Dorsolateral prefrontal cortex (tissue), 120 donors: ENCODE measurements at regions of chr19 and their contacts with region 1.

Region 1: GRCh38 chr19:2032296-2032941 is 16.9 kb upstream of the BTBD2 start:
- DNase-seq: peak; percentile 90 to 99 (median 96)
- H3K4me3 ChIP-seq: peak overlapping the region in 45 of 59 donors; percentile 1 to 48 (median 28)
- H3K27ac ChIP-seq: peak overlapping the region; percentile 85 to 100 (median 98)
- H3K27me3 ChIP-seq: no peaks in the 10 kb centered on the region
- CTCF ChIP-seq: peak in 16 of 56 donors; percentile 6 to 46 (median 17)

Region 2: DNA sequence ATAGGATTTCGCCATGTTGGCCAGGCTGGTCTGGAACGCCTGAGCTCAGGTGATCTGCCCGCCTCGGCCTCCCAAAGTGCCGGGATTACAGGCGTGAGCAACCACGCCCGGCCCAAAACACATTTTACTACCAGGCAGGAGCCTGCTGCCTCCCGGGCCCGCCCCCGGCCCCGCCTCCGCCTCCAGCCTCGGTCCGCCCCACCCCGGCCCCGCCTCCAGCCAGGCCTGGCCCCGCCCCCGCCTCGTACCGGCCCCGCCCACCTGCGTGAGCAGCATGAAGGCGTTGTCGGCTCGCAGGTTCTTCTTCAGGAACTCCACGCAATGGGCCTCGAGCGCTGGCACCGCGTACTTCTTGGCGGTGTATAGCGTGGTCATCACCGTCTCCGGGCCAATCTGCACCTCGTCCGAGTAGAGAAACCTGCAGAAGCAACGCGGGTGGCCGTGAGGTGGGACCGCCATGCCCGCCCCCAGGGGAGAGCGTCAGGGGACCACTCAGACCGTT is 39.6 kb before region 1 on chr19:
- intact Hi-C with region 1: no loop called
- DNase-seq: no peak
- H3K4me3 ChIP-seq: no peak overlapping the region
- H3K27ac ChIP-seq: no peak overlapping the region
- H3K27me3 ChIP-seq: no peaks in the 10 kb centered on the region
- CTCF ChIP-seq: no peak

Region 3: DNA sequence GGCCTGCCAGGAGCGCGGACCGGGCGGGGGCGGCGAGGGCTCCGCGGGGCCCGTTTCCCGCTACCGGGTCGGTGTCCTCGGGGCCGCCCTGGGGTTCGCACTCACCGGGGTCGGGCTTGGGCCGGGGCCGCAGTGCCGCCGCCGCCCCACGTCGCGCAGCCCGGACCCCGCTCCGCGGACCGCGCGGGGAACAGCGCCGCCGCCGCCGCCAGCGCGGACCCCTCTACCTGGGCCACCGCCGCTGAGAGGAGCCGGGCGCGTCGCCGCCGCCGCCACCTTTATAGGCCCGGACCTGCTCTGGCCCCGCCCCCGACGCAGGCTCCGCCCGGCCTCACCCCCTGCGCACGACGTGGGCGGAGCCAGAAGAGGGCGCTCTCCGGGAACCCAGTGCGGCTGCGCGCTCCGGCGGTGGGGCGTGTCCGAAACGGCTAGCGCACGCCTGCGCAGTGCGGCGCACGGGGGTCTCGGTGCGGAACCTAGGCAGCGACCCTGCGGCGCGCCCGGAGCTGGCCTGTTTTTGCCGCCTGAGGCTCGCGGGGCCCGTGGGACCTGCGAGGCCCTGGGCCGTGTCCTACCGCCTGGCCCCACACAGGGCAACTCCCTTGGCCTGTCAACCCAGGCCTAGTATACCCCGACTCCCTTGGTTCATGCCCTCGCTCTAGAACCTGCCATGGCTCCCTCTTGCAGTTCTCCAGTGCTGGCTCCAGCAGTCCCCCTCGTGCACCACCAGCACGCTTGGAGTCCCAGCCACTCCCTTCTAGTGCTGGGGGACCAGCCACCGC is 18.8 kb after region 1 on chr19 and contains the start of gene MKNK2:
- intact Hi-C with region 1: loop called in 1 of 2 experiments (anchors 1 kb)
- DNase-seq: peak; percentile 84 to 98 (median 92)
- H3K4me3 ChIP-seq: peak within 1 kb of the TSS; percentile 67 to 97 (median 90)
- H3K27ac ChIP-seq: peak within 1 kb of the TSS; percentile 83 to 99 (median 96)
- H3K27me3 ChIP-seq: no peaks in the 10 kb centered on the region
- CTCF ChIP-seq: peak; percentile 23 to 95 (median 82)
- total RNA-seq, gene MKNK2: 40.9 to 364 (median 77.4) TPM